SK-MEL-5 (cell line): ENCODE measurements at regions of chr15 and their contacts with region 1.

Region 1: GRCh38 chr15:65869127-65869953 is at the start of gene RAB11A:
- DNase-seq: peak; percentile 95
- total RNA-seq, gene RAB11A: 283 TPM in 2 replicates

Region 2: GRCh38 chr15:65723876-65724275 is 145.5 kb before region 1 on chr15:
- in situ Hi-C with region 1: loop called (anchors 25 kb)
- DNase-seq: no peak

Region 3: GRCh38 chr15:65980824-65981456 is 111.6 kb after region 1 on chr15:
- in situ Hi-C with region 1: no loop called
- DNase-seq: peak; percentile 74